Tibial artery (tissue), 4 donors: ENCODE measurements at regions of chr3 and their contacts with region 1.

Region 1: DNA sequence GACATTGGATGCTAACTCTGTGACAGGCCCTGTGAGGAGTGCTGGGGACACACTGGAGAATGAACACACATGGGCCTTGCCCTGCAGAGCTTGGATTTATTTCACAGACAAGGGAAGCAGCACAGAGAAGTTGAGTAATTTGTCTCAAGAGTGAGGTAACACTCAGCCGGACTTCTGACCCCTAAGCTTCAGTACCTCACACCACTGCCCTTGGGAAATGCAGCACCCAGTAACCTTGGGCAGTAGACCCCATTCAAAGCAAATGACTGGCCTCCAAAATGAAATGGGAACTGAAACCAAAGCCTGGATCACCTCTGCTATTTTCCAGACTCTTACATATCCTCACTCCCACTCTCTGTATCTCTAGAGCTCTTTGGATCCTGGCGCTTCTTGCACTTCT is 37.3 kb downstream of the RFT1 start:
- DNase-seq: no peak
- H3K4me3 ChIP-seq: no peak overlapping the region
- H3K27ac ChIP-seq: no peak overlapping the region
- H3K4me1 ChIP-seq: peaks cover 0 to 3% (median 0%) of the 10 kb centered on the region in 4 donors
- H3K27me3 ChIP-seq: no peaks in the 10 kb centered on the region
- CTCF ChIP-seq: no peak

Region 2: GRCh38 chr3:53287131-53287629 is 194.2 kb after region 1 on chr3:
- intact Hi-C with region 1: no loop called
- DNase-seq: no peak
- H3K4me3 ChIP-seq: no peak overlapping the region
- H3K27ac ChIP-seq: no peak overlapping the region
- H3K4me1 ChIP-seq: no peaks in the 10 kb centered on the region
- H3K27me3 ChIP-seq: no peaks in the 10 kb centered on the region
- CTCF ChIP-seq: no peak

Region 3: GRCh38 chr3:53606793-53607192 is 513.9 kb after region 1 on chr3:
- intact Hi-C with region 1: loop called (anchors 5 kb)
- DNase-seq: no peak
- H3K4me3 ChIP-seq: no peak overlapping the region
- H3K27ac ChIP-seq: no peak overlapping the region
- H3K4me1 ChIP-seq: no peaks in the 10 kb centered on the region
- H3K27me3 ChIP-seq: peaks cover 0 to 5% of the 10 kb centered on the region in 2 donors
- CTCF ChIP-seq: no peak